ENCODE measurements at regions of chr22 and their contacts with region 1.

Region 1: GRCh38 chr22:25447686-25448434 is 116.6 kb upstream of the GRK3 start:
- DNase-seq: peak; percentile 97
- H3K4me3 Mint-ChIP-seq: peak overlapping the region; percentile 90
- H3K27ac Mint-ChIP-seq: peak overlapping the region; percentile 95
- H3K4me1 Mint-ChIP-seq: peaks cover 39% of the 10 kb centered on the region
- H3K27me3 Mint-ChIP-seq: no peaks in the 10 kb centered on the region

Region 2: DNA sequence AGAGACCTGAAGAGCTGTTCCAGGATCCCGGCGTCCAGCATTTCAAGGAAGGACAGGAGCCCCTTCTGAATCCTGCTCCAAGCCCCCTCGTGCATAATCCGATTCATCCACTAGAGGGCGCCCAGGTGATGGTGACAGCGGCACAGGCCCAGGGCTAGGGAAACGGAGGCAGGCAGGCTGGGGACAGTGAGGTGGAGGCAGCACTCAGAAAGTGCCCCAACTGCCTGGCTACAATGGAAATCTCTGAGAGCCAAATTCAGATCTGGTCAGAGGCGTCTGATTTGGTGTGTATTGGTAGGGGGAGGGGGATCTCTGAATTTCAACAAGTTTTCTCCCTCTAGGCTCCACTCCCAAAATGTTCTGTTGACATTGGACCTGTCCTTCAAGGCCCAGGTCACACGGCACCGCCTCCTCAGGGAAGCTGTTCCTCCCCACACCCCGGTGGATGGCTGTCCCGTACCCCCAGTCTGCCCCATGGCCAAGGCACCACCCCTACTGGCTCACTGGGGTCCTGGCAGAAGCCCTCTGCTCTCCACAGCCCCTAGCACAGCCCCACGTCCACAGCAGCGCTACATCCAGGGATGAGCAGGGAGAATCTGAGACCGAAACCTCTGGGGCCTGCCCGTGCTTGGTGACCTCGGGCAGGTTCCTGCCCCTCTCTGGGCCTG is 85.5 kb before region 1 on chr22:
- intact Hi-C with region 1: loop called (anchors 10 kb)
- DNase-seq: peak; percentile 93
- H3K4me3 Mint-ChIP-seq: no peak overlapping the region
- H3K27ac Mint-ChIP-seq: peak overlapping the region; percentile 28
- H3K4me1 Mint-ChIP-seq: peaks cover 7% of the 10 kb centered on the region
- H3K27me3 Mint-ChIP-seq: no peaks in the 10 kb centered on the region

Region 3: GRCh38 chr22:25404928-25405816 is 42.7 kb before region 1 on chr22:
- intact Hi-C with region 1: loop called (anchors 2 kb)
- DNase-seq: peak; percentile 94
- H3K4me3 Mint-ChIP-seq: peak overlapping the region; percentile 90
- H3K27ac Mint-ChIP-seq: peak overlapping the region; percentile 79
- H3K4me1 Mint-ChIP-seq: peaks cover 25% of the 10 kb centered on the region
- H3K27me3 Mint-ChIP-seq: no peaks in the 10 kb centered on the region

Region 4: DNA sequence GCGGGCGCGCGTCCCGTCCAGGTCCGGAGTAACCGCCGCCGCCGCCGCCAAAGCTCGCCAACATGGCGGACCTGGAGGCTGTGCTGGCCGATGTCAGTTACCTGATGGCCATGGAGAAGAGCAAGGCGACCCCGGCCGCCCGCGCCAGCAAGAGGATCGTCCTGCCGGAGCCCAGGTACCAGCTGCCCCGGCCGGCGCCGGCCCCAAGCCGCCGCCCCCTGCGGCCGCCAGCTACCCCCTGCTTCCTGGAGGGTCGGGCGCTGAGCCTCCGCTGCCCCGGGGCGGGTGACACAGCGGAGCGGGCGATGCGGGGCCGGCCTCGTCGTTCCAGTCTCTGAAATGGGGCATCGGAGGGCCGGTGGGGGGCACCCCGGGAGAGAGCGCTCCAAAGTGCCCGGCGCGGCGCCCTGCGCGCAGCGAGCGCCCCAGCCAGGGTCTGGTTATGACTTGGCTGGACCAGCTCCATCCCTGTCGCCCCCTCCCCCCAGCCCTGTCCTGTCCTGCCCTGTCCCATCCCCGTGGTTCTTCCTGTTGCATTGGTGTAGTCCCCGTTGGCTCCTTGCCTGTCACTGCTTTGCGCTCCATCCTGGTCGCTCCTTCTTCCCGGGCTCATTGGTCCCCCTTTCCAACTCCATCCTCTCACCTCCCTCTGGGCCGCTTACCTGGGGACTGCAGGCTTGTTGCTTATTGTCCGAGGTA is 117.3 kb after region 1 on chr22:
- intact Hi-C with region 1: no loop called
- DNase-seq: peak; percentile 79
- H3K4me3 Mint-ChIP-seq: peak overlapping the region; percentile 96
- H3K27ac Mint-ChIP-seq: peak overlapping the region; percentile 95
- H3K4me1 Mint-ChIP-seq: peaks cover 64% of the 10 kb centered on the region
- H3K27me3 Mint-ChIP-seq: no peaks in the 10 kb centered on the region